Mammary epithelial cell (primary cell): ENCODE measurements at regions of chr9 and their contacts with region 1.

Region 1: DNA sequence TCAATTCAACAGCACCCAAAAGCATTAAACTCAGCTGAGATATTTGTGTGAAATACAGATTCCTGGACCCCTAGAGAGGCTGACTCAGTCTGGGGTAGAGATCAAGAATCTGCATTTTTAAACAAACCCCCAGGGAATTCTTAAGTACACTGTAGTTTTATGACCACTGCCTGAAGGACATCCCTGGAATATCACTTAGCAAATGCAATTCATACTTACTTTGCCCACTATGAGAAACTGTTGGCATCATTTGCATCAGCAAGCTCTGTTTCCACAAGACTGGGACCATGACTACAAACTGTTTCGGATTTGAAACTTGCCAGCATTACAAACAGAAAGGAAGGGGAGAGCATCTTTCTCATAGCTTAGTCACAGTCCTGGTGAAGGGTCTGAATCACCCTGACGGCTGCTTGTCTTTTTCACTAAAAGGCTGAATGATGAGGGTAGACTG is 63.7 kb downstream of the MLLT3 start:
- DNase-seq: peak; percentile 94
- H3K4me3 ChIP-seq: no peak overlapping the region
- H3K27ac ChIP-seq: no peak overlapping the region
- H3K4me1 ChIP-seq: peaks cover 10% of the 10 kb centered on the region
- H3K27me3 ChIP-seq: no peaks in the 10 kb centered on the region
- CTCF ChIP-seq: no peak

Region 2: DNA sequence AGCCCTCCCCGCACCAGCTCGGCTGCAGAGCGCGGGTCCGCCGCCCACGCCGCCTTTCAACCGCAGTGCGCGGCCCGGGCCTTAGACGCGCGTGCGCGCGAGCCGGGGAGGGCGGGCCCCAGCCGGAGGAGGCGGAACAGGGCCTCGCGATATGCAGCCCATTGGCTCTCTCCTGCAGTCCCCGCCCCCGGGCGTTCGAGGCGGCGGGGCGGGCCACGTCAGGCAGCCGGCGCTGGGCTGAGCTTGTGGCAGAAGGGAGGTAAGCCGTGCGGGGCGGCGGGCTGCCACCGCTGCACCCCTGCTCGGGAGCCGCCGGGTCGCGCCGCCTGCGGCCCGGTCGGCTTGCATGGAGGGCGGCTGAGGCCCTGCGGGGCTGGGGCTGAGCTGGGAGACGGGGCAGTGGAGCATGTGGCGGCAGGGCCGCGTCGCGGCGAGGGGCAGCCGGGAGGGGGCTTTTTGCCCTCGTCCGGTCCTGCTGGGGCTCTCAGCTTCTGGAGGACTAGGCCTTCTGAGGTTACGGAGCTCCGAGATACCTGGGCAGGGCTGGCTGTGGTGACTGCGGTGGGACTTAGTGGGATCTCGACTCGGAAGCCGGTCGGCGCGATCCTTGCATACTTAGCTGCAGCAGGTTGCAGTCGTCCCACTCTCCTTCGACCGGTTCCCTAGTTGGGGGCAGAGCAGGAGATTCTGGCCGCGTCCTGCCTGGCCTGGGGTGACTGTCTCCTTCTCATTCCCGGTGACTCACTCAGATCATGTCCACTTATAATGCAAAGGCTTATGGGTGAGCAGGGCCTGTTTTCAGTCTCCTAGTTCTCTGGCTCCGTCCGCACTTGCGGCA is 125.7 kb after region 1 on chr9 and contains the start of gene FOCAD:
- CTCF ChIA-PET with region 1: no interaction called
- dilution Hi-C with region 1: no loop called
- in situ Hi-C with region 1: no loop called
- intact Hi-C with region 1: loop called (anchors 10 kb)
- DNase-seq: peak; percentile 94
- H3K4me3 ChIP-seq: peak within 1 kb of the TSS; percentile 52 to 73 (median 68)
- H3K27ac ChIP-seq: peak within 1 kb of the TSS; percentile 69
- H3K4me1 ChIP-seq: peaks cover 24% of the 10 kb centered on the region
- H3K27me3 ChIP-seq: no peaks in the 10 kb centered on the region
- CTCF ChIP-seq: no peak
- total RNA-seq, gene FOCAD: 22.5 to 48.2 TPM